ENCODE measurements at regions of chr6 and their contacts with region 1.

Region 1: GRCh38 chr6:75934643-75935472 is 137.6 kb downstream of the IMPG1 start:
- DNase-seq: peak; percentile 41
- ATAC-seq: peak; percentile 78

Region 2: GRCh38 chr6:75694406-75694805 is 240.5 kb before region 1 on chr6:
- intact Hi-C with region 1: no loop called
- DNase-seq: no peak
- ATAC-seq: no peak

Region 3: GRCh38 chr6:76351275-76351674 is 416.4 kb after region 1 on chr6:
- intact Hi-C with region 1: loop called (anchors 2 kb)
- DNase-seq: no peak
- ATAC-seq: peak; percentile 65

Region 4: GRCh38 chr6:77457720-77458349 is 1523.0 kb after region 1 on chr6:
- intact Hi-C with region 1: loop called (anchors 5 kb)
- DNase-seq: peak; percentile 68
- ATAC-seq: peak; percentile 89

Measured in left ventricle myocardium superior (tissue), 1 donor.